CD8-positive, alpha-beta memory T cell (primary cell): ENCODE measurements at regions of chr11 and their contacts with region 1.

Region 1: DNA sequence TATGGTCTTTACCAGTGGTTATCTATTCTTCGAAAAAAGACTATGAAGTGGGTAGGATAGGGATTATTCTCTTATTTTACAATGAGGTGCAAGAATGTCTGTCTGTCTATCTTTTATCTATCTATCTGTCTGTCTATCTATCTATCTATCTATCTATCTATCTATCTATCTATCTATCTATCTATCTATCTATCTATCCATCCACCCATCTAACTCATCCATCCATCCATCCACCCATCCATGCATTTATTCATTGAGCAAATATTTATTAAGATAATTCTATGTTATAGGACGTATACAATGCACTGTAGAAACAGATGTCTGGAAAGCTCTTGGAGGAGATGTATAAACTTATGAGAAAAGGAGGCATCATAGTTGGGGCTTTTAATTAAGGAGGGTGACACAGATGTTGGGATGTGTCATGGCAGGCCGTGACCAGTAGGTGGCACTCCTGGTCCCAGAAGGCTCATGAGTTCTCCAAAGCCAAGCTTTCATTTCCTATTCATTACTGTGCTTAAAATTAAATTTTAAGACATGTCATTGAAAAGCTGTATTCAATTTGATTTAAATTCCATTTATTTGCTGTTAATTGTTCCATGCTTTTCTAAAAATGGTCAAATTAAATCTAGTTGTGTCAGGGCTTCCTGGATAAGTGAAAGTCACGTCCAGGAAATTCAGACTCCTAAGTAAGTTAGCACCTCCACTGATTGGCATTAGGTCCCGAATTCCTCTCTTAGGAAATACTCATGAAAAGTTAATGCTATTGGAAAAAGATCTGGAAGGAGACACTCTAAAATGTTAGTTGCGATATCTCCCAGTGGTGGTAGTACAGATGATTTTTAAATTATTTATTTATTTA is 19.0 kb upstream of the E2F8 start:
- DNase-seq: peak; percentile 30 to 78 (median 48)
- H3K4me3 ChIP-seq: no peak overlapping the region
- H3K4me3 Mint-ChIP-seq: no peak overlapping the region
- H3K27ac ChIP-seq: no peak overlapping the region
- H3K27ac Mint-ChIP-seq: peak overlapping the region in 1 of 8 donors; percentile 7
- H3K4me1 ChIP-seq: no peaks in the 10 kb centered on the region
- H3K4me1 Mint-ChIP-seq: no peaks in the 10 kb centered on the region
- H3K27me3 ChIP-seq: no peaks in the 10 kb centered on the region
- H3K27me3 Mint-ChIP-seq: peaks cover 2 to 7% of the 10 kb centered on the region in 2 donors

Region 2: GRCh38 chr11:19060629-19061028 is 199.1 kb before region 1 on chr11 and contains the start of gene MRGPRX2:
- CTCF ChIA-PET with region 1: no interaction called
- POLR2A ChIA-PET with region 1: no interaction called
- DNase-seq: no peak
- H3K4me3 ChIP-seq: no peak within 1 kb of the TSS
- H3K4me3 Mint-ChIP-seq: peak within 1 kb of the TSS in 6 of 7 donors; percentile 30 to 85 (median 64)
- H3K27ac ChIP-seq: no peak within 1 kb of the TSS
- H3K27ac Mint-ChIP-seq: peak within 1 kb of the TSS; percentile 1 to 82 (median 61)
- H3K4me1 ChIP-seq: peaks cover 19% of the 10 kb centered on the region
- H3K4me1 Mint-ChIP-seq: peaks cover 26 to 40% (median 29%) of the 10 kb centered on the region in 3 donors
- H3K27me3 ChIP-seq: no peaks in the 10 kb centered on the region
- H3K27me3 Mint-ChIP-seq: peaks cover 3 to 5% of the 10 kb centered on the region in 2 donors
- total RNA-seq, gene MRGPRX2: not detected

Region 3: DNA sequence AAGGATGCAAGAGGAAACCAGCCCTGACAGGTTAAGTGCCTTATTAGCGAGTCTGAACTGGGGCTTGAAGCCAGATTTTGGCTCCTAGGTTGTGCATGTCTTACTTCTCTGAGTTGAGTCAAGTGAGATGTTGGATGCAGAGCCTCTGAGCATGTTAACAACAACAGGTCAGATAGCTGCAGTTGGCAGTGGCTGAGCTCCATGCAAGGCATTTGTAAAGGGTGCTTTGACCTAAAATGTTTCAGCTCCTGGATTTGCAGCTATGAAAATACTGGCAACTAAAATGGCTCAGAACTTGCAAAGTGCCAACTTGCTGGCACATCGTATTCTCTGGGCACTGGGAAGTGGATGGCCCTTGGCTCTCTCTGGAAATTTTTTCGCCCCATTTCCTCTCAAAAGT is 41.5 kb before region 1 on chr11:
- CTCF ChIA-PET with region 1: no interaction called
- POLR2A ChIA-PET with region 1: no interaction called
- DNase-seq: no peak
- H3K4me3 ChIP-seq: no peak overlapping the region
- H3K4me3 Mint-ChIP-seq: no peak overlapping the region
- H3K27ac ChIP-seq: no peak overlapping the region
- H3K27ac Mint-ChIP-seq: no peak overlapping the region
- H3K4me1 ChIP-seq: no peaks in the 10 kb centered on the region
- H3K4me1 Mint-ChIP-seq: no peaks in the 10 kb centered on the region
- H3K27me3 ChIP-seq: no peaks in the 10 kb centered on the region
- H3K27me3 Mint-ChIP-seq: peaks cover 3 to 23% of the 10 kb centered on the region in 2 donors

Region 4: GRCh38 chr11:19553683-19554333 is 294.1 kb after region 1 on chr11:
- CTCF ChIA-PET with region 1: interaction called, 22 read pairs
- POLR2A ChIA-PET with region 1: no interaction called
- DNase-seq: peak; percentile 17 to 77 (median 56)
- H3K4me3 ChIP-seq: no peak overlapping the region
- H3K4me3 Mint-ChIP-seq: no peak overlapping the region
- H3K27ac ChIP-seq: no peak overlapping the region
- H3K27ac Mint-ChIP-seq: no peak overlapping the region
- H3K4me1 ChIP-seq: no peaks in the 10 kb centered on the region
- H3K4me1 Mint-ChIP-seq: peaks cover 4 to 6% (median 5%) of the 10 kb centered on the region in 3 donors
- H3K27me3 ChIP-seq: peaks cover 10% of the 10 kb centered on the region
- H3K27me3 Mint-ChIP-seq: peaks cover 4 to 29% of the 10 kb centered on the region in 2 donors